AG04450 (cell line): ENCODE measurements at regions of chr13 and their contacts with region 1.

Region 1: DNA sequence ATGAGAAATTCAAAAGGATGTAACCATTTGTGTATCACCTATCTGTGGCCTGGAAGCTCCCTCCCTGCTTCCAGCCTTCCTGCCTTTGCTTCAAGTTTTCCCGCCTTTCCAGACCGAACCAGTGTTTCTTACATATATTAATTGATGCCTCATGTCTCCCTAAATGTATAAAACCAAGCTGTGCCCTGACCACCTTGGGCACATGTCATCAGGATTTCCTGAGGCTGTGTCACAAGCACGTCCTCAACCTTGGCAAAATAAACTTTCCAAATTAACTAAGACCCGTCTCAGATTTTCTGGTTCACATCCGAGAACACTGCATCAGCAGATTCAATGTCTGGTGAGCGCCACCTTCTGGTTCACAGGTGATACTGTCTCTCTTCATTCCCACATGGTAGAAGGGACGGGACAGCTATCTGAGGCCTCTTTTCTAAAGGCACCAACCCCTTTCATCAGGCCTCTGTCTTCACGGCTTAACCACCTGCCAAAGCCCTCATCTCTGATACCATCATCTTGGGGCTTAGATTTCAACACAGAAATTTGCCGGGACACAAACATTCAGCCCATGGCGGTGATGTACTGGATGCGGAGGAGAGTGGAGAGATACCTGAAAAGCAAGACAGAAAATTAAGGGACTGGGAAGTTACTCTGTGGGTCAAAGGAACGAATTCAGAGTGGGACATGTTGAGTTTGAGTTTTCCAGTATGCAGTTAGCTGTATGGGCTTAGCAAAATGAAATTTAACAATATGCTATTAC is 58.7 kb upstream of the PABPC3 start:
- DNase-seq: peak; percentile 23
- H3K4me3 ChIP-seq: no peak overlapping the region
- H3K27ac ChIP-seq: no peak overlapping the region
- H3K27me3 ChIP-seq: no peaks in the 10 kb centered on the region
- CTCF ChIP-seq: peak; percentile 79

Region 2: DNA sequence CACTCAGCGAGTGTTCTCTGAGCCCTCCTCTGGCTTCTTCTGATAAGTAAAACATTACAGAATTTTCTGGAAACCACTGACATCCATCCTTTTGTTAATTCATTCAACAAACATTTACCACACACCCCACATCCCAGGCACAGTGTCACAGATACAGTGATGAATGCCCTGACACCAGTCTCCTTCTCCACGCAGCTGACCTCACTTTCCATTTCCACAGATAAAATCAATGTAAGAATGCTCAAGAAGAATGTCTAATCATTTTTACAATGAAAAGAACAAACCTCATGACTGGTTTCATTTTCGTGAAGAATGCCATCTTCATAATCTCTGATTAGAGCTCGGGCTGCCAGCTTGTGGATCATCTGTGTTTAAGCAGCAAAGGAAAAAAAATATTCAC is 593.9 kb before region 1 on chr13:
- CTCF ChIA-PET with region 1: no interaction called
- POLR2A ChIA-PET with region 1: no interaction called
- DNase-seq: no peak
- H3K4me3 ChIP-seq: no peak overlapping the region
- H3K27ac ChIP-seq: no peak overlapping the region
- H3K27me3 ChIP-seq: no peaks in the 10 kb centered on the region
- CTCF ChIP-seq: no peak

Region 3: DNA sequence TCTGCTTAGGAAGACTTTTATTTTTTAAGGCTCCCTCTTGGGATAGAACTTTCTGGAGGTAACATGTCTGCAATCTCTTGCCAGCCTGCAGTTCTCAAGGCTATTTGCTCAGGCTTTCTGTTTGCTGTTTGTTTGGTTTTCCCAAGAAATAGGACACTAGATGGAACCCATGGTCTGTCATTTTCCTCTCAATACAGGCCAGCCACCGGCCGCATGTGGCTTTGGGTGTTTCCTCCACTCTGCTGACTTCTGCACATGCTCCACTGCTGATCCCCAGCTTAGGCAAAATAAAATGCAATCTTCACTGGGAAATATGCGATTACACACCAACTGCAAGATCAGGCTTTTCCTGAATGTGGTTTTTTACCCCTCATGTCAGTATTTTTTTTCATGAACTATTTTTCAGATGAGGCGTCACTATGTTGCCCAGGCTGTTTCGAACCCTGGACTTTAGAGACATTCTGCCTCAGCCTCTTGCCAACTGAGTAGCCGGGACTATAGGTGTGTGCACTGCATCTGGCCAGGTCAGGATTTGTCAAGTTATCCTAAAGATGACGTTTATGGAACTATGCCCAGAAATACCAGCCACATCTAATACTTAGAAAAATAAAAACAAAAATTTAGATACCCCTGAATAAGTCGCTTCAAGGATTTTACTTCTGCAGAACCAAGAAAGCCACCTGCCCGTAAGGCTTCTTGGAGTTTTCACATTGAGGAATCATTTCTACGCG is 35.6 kb before region 1 on chr13:
- CTCF ChIA-PET with region 1: interaction called, 11 read pairs
- POLR2A ChIA-PET with region 1: no interaction called
- DNase-seq: no peak
- H3K4me3 ChIP-seq: no peak overlapping the region
- H3K27ac ChIP-seq: no peak overlapping the region
- H3K27me3 ChIP-seq: no peaks in the 10 kb centered on the region
- CTCF ChIP-seq: no peak

Region 4: DNA sequence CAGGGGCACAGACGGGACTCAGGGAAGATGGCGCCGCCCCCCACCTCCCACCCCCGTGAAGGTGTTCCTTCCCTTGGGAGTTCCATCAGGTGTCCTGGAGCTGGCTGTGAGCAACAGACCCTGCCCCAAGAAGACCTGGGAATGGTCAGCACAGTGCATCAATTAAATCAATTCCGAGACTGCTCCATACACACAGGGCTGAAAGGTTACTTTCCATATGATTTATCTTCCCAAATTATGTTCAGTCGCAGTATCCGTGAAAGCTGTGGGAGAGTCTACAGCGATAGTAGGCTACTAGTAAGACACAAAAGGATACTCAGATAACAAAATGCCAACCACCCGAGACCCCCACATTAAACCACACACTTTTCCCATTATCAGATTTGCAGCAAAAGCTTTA is 13.1 kb before region 1 on chr13:
- CTCF ChIA-PET with region 1: no interaction called
- POLR2A ChIA-PET with region 1: no interaction called
- DNase-seq: no peak
- H3K4me3 ChIP-seq: no peak overlapping the region
- H3K27ac ChIP-seq: no peak overlapping the region
- H3K27me3 ChIP-seq: peaks cover 2% of the 10 kb centered on the region
- CTCF ChIP-seq: no peak